ENCODE measurements at regions of chr15 and their contacts with region 1.

Region 1: GRCh38 chr15:77059786-77060361 is 11.0 kb downstream of the TSPAN3 start:
- DNase-seq: peak; percentile 34
- H3K4me3 ChIP-seq: no peak overlapping the region
- H3K27ac ChIP-seq: no peak overlapping the region
- H3K4me1 ChIP-seq: peaks cover 17% of the 10 kb centered on the region
- CTCF ChIP-seq: no peak

Region 2: GRCh38 chr15:77048135-77048876 is 11.6 kb before region 1 on chr15:
- CTCF ChIA-PET with region 1: no interaction called
- POLR2A ChIA-PET with region 1: interaction called, 19 read pairs
- intact Hi-C with region 1: no loop called
- DNase-seq: no peak
- H3K4me3 ChIP-seq: no peak overlapping the region
- H3K27ac ChIP-seq: no peak overlapping the region
- H3K4me1 ChIP-seq: no peaks in the 10 kb centered on the region
- CTCF ChIP-seq: no peak

Measured in OCI-LY7 (cell line).